Activated CD4-positive, alpha-beta memory T cell treated with anti-CD3 and anti-CD28 coated beads, Interleukin-2, amount 10 ng/mL, durations not matched to agents 7 days and 5 days (primary cell): ENCODE measurements at regions of chr11 and their contacts with region 1.

Region 1: DNA sequence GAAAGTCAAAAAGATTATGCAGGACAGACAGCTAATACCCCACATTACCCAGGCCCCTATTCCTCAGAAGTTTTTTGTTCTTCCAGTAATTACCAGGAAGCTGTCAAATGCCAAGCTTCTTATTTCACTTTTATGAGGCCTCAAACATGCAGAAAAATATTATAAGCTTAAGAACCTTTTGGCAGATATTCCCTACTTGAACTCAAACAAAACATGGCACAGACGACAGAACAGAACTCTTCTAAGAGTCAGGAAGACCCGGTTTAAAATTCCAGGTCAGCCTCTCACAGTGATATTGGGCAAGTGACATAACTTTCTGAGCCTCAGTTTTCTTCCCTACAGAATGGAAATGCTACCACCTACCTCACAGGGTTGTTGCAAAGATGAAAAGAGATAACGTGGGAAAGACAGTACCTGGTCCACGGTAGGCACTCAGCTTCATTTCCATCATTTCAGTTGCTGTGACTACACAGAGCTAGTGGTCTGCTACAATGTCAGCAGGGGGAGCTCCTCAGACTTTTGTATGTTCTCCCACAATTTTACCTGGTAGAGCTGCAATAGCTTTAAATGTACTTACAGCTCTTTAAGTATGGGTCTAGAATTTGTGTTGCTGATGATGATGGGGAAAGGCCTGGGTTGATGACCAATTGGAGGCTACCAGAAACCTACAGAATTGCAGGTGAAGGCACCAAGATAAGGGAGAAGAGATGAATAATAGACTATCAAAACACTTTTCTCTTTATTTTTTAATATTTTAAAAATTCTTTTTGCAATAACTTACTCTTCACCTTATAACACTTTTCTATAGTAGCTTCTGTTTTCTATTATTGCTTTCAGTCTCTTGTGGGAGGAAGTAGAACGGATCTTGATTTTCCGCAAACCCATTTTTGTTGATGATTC is 98.3 kb upstream of the CHRM4 start:
- DNase-seq: peak; percentile 36
- H3K4me3 Mint-ChIP-seq: no peak overlapping the region
- H3K27ac Mint-ChIP-seq: no peak overlapping the region
- H3K4me1 Mint-ChIP-seq: peaks cover 3% of the 10 kb centered on the region
- H3K27me3 Mint-ChIP-seq: no peaks in the 10 kb centered on the region

Region 2: DNA sequence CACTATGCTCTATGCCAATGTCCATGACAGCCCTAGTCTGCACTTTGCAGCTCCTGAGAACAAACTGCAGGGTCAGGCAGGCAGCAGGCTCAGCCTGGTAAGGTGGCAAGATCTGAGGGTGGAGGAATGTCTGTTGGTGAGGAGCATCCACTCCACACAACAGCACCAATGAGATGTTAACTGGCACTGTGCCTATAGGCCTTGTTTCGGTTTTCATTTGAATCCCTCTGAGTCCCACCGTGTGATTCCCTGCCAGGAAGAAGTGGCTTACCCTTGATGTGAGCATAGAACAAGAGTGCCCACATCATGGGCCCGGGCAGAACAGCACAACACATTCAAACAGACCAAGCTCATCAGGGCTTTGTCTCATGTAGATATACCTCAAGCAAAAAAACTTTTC is 54.2 kb before region 1 on chr11:
- CTCF ChIA-PET with region 1: no interaction called
- POLR2A ChIA-PET with region 1: no interaction called
- DNase-seq: no peak
- H3K4me3 Mint-ChIP-seq: no peak overlapping the region
- H3K27ac Mint-ChIP-seq: no peak overlapping the region
- H3K4me1 Mint-ChIP-seq: no peaks in the 10 kb centered on the region
- H3K27me3 Mint-ChIP-seq: no peaks in the 10 kb centered on the region

Region 3: DNA sequence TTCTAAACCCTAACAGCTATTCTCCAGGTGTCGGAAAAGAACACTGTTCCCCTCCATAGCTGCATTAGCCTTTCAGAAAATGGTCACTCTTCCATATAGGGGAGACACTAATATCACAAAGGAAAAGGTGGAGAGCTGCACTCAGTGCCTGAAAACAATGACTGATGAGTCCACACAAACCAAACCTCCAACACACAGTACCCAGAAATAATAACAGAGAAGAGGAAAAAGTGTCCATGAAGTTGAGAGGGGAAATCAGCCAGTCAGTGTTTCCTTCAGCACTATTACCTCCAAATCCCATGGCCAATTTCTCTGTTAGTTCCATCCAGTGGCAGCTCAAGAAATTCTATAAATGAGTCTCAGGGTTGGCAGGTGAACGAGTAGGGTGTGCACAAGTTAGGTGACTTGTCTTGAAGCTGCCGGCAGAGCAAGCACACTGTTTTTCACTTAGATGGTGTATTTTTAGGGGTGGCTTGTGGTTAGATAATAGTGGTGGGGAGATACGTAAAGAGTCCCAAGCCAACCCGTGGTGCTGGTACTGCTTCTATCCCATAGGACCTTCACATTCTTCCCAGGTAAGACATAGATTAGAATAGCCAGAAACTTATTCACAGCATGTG is 13.9 kb before region 1 on chr11:
- CTCF ChIA-PET with region 1: interaction called, 17 read pairs
- POLR2A ChIA-PET with region 1: interaction called, 3 read pairs
- DNase-seq: no peak
- H3K4me3 Mint-ChIP-seq: no peak overlapping the region
- H3K27ac Mint-ChIP-seq: peak overlapping the region; percentile 63
- H3K4me1 Mint-ChIP-seq: peaks cover 37% of the 10 kb centered on the region
- H3K27me3 Mint-ChIP-seq: no peaks in the 10 kb centered on the region

Region 4: DNA sequence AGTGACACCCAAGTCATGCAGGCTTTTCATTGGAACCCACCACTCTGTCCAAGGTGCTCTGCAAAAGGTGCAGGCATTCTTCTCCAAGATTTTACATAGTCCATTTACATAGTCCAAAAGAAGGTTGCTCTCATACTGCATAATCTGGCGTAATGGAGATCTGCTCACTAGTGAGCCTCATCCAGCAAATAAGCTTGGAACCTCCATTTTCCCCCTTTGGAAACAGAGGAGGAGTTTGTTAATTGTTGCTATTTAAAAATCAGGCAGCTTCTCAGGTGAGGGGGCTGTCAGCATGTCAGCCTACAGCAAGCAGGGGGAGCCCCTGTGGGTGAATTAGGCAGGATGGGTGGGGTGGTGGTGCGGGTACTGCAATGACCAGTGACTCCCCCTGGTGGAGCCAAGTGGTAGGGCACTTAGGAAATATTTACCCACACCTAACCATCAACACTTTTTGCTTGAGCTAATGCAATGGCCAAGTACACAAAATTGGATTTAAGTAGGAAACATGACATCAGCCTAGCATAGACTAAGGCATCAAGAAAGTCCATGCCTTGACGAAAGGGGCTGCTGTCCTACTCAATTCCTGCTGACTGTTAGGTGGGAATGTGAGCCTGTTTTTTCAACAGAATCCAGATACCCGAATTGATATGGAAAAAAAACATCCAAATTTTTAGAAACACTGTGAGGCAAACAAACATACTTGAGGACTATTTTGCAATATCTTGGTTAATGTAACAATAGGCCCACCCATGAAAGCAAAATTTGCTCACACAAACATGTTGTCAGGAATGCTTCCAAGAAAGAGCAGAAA is 39.4 kb after region 1 on chr11:
- CTCF ChIA-PET with region 1: interaction called, 30 read pairs
- POLR2A ChIA-PET with region 1: no interaction called
- DNase-seq: peak; percentile 76
- H3K4me3 Mint-ChIP-seq: no peak overlapping the region
- H3K27ac Mint-ChIP-seq: peak overlapping the region; percentile 12
- H3K4me1 Mint-ChIP-seq: peaks cover 23% of the 10 kb centered on the region
- H3K27me3 Mint-ChIP-seq: no peaks in the 10 kb centered on the region

Region 5: GRCh38 chr11:46537537-46538295 is 47.8 kb after region 1 on chr11:
- CTCF ChIA-PET with region 1: interaction called, 13 read pairs
- POLR2A ChIA-PET with region 1: no interaction called
- DNase-seq: peak; percentile 69
- H3K4me3 Mint-ChIP-seq: no peak overlapping the region
- H3K27ac Mint-ChIP-seq: peak overlapping the region; percentile 33
- H3K4me1 Mint-ChIP-seq: peaks cover 4% of the 10 kb centered on the region
- H3K27me3 Mint-ChIP-seq: no peaks in the 10 kb centered on the region